Ovary (tissue), 10 donors: ENCODE measurements at regions of chr1 and their contacts with region 1.

Region 1: DNA sequence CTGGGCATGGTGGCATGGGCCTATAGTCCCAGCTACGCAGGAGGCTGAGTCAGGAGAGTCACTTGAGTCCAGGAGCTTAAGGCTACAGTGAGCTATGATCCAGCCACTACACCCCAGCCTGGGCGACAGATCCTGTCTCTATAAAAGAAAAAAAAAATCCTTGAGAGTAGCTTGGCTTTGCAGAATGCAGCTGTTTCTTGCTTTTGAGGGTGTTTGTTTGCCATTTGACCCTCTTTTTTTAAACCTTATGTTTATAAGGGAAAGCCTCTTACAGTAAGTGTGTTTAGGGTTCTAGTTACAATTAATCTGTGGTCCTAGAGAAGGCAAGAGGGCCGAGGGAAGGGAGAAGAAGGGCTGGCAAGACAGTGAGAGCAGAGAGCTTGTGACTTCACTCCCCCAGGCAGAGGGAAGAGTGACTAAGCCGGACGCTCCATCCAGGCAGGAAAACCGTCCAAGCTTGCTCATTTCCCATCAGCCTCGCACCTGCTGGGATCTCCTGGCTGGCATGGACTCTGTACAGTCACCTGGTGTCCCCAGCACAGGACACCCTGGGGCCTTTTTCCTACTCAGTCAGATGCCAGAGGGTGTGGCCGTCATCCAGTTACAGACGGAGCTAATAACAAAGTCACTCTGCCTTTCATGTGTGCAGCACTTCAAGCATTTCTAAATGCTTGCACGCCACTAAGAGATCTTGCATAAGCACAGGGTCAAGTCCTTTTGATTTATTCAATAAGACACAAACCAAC is 55.5 kb upstream of the PSEN2 start:
- DNase-seq: peak in 4 of 5 donors; percentile 43 to 70 (median 59)
- H3K4me3 ChIP-seq: no peak overlapping the region
- H3K27ac ChIP-seq: peak overlapping the region in 1 of 2 donors; percentile 59
- H3K4me1 ChIP-seq: peaks cover 2% of the 10 kb centered on the region
- H3K27me3 ChIP-seq: no peaks in the 10 kb centered on the region
- CTCF ChIP-seq: no peak
- EP300 ChIP-seq: peak; percentile 86
- POLR2A ChIP-seq: no peak

Region 2: DNA sequence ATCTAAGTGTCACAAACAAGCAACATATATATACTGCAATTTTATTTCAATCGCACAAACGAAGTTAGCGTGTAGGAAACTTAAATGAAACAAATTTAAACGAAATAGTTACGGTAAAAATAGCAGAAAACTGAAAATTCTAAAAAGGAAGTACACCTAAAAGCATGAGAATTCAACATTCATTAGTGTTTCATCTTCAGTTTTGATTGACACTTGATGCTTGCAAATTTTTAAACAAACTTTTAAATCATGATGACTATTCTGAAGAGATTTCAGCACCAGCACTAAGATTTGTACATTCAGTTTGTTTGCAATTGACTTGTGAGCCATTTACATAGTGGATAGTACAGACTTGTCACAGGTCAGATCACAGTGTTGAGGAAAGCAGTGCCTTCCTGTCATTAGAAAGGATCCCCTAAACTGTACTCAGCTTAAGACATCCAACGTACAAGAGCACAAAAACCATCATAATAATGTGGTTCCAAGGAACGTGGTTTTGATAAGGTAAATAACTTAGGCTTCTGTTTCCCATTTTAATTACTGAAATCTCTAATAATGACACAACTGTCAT is 1320.0 kb before region 1 on chr1:
- intact Hi-C with region 1: loop called in 1 of 4 experiments (anchors 5 kb)
- DNase-seq: no peak
- H3K4me3 ChIP-seq: no peak overlapping the region
- H3K27ac ChIP-seq: no peak overlapping the region
- H3K4me1 ChIP-seq: no peaks in the 10 kb centered on the region
- H3K27me3 ChIP-seq: no peaks in the 10 kb centered on the region
- CTCF ChIP-seq: no peak
- EP300 ChIP-seq: no peak
- POLR2A ChIP-seq: no peak

Region 3: GRCh38 chr1:226786550-226786949 is 28.4 kb before region 1 on chr1:
- intact Hi-C with region 1: loop called in 1 of 4 experiments (anchors 2 kb)
- DNase-seq: no peak
- H3K4me3 ChIP-seq: no peak overlapping the region
- H3K27ac ChIP-seq: no peak overlapping the region
- H3K4me1 ChIP-seq: no peaks in the 10 kb centered on the region
- H3K27me3 ChIP-seq: no peaks in the 10 kb centered on the region
- CTCF ChIP-seq: no peak
- EP300 ChIP-seq: no peak
- POLR2A ChIP-seq: no peak